Thyroid gland (tissue), 4 donors: ENCODE measurements at regions of chr1 and their contacts with region 1.

Region 1: DNA sequence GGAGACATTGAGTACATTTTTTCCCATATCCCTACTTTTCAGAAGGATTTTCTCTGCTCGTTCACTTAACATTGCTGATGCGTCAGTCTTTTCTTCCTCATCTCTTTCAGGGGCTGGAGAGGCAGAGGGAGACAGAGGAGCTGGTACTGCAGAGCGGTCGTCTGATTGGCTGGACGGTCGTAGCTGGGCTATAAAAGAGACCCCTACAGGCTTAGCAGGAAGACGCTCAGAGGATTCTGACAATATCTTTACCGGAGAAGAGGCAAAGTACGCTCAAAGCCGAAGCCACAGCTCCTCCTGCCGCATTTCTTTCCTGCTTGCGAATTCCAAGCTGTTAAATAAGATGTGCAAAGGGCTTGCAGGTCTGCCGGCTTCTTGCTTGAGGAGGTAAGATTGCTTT is at the start of gene RGS4:
- DNase-seq: peak in 1 of 2 donors; percentile 4
- H3K4me3 ChIP-seq: no peak within 1 kb of the TSS
- H3K27ac ChIP-seq: no peak within 1 kb of the TSS
- H3K4me1 ChIP-seq: no peaks in the 10 kb centered on the region
- H3K27me3 ChIP-seq: peaks cover 5% of the 10 kb centered on the region
- CTCF ChIP-seq: peak in 1 of 6 experiments; percentile 6
- POLR2A ChIP-seq: no peak
- total RNA-seq, gene RGS4: 1.8 to 10.5 (median 3.7) TPM

Region 2: DNA sequence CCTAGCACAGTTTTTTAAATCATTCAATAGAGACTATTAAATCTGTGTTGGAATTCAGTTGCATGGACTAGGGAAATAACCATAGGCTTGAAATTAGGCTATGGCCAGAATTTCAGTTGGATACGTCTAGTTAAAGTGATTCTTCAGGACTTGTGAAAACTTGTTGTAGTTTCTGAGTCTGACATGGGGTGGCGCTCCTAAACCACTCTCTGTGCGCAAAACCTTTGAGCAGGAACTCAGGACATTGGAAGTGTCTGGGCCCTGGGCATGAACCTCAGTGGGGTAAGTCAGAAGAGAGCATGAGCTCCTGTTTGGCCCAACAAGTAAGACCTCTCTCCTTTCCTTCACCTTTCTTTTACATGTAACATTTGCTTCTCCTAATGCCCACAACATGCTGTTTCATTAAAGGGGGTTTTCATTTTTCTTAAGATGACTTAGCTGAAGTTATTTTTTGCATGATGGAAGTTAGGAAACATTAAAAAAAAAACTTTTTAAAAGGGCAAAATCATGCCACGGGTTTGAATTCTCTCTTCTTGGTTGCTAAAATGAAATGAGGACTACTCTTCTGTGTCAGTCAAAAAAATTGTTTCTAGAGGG is 191.0 kb before region 1 on chr1:
- intact Hi-C with region 1: loop called (anchors 10 kb)
- DNase-seq: peak; percentile 38 to 52
- H3K4me3 ChIP-seq: no peak overlapping the region
- H3K27ac ChIP-seq: no peak overlapping the region
- H3K4me1 ChIP-seq: no peaks in the 10 kb centered on the region
- H3K27me3 ChIP-seq: no peaks in the 10 kb centered on the region
- CTCF ChIP-seq: peak in 5 of 6 experiments; percentile 28 to 73 (median 57)
- POLR2A ChIP-seq: no peak

Region 3: GRCh38 chr1:162939039-162939438 is 130.1 kb before region 1 on chr1:
- intact Hi-C with region 1: no loop called
- DNase-seq: no peak
- H3K4me3 ChIP-seq: no peak overlapping the region
- H3K27ac ChIP-seq: no peak overlapping the region
- H3K4me1 ChIP-seq: no peaks in the 10 kb centered on the region
- H3K27me3 ChIP-seq: no peaks in the 10 kb centered on the region
- CTCF ChIP-seq: no peak
- POLR2A ChIP-seq: no peak

Region 4: GRCh38 chr1:163168053-163168452 is 98.9 kb after region 1 on chr1:
- intact Hi-C with region 1: loop called (anchors 10 kb)
- DNase-seq: no peak
- H3K4me3 ChIP-seq: no peak overlapping the region
- H3K27ac ChIP-seq: no peak overlapping the region
- H3K4me1 ChIP-seq: no peaks in the 10 kb centered on the region
- H3K27me3 ChIP-seq: no peaks in the 10 kb centered on the region
- CTCF ChIP-seq: no peak
- POLR2A ChIP-seq: no peak

Region 5: GRCh38 chr1:163213626-163214025 is 144.5 kb after region 1 on chr1:
- intact Hi-C with region 1: no loop called
- DNase-seq: no peak
- H3K4me3 ChIP-seq: no peak overlapping the region
- H3K27ac ChIP-seq: no peak overlapping the region
- H3K4me1 ChIP-seq: no peaks in the 10 kb centered on the region
- H3K27me3 ChIP-seq: no peaks in the 10 kb centered on the region
- CTCF ChIP-seq: no peak
- POLR2A ChIP-seq: no peak